H1 (cell line): ENCODE measurements at regions of chr1 and their contacts with region 1.

Region 1: DNA sequence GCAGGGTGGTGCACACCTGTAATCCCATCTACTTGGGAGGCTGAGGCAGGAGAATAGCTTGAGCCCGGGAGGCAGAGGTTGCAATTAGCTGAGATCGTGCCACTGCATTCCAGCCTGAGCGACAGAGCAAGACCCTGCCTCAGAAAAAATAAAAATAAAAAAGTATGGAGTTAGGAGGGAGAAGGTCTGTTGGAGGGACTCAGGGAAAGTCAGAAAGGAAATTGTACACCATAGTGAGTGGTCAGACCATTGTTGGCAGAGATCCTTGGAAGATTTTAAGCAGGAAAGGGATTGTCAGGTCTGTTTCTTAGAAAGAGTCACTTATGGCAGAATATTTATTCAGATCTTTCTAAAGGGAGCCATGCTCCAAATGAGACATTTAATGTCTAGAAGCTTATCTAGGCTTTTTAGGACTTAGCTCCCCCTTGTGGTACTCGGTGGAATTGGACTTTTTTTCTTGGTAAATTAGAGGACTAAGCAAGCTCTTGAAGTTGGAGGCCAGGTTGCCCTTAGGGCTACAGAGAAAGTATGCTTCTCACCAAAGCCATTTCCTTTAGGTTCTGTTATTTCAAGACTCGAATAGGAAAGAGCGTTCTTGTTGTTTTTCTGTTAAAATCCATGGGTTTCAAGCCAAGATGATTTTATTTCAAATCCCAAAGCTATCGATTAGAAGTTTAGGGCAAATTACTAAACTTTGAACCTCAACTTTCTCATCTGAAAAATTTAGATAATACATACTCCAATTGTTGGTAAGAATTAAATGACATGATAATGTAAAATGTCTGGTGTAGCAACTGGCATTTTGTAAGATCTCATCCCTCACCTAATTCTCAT is 16.5 kb downstream of the MIA3 start:
- DNase-seq: peak in 1 of 2 experiments; percentile 64
- H3K4me3 ChIP-seq: no peak overlapping the region
- H3K27ac ChIP-seq: no peak overlapping the region
- H3K4me1 ChIP-seq: no peaks in the 10 kb centered on the region
- H3K27me3 ChIP-seq: no peaks in the 10 kb centered on the region
- CTCF ChIP-seq: peak in 2 of 3 experiments; percentile 67 to 83; a peak in 3 of 4 replicates
- EP300 ChIP-seq: no peak
- POLR2A ChIP-seq: no peak
- RAD21 ChIP-seq: peak; percentile 69 to 70

Region 2: GRCh38 chr1:222465211-222466041 is 169.0 kb before region 1 on chr1:
- CTCF ChIA-PET with region 1: interaction called, 17 read pairs
- POLR2A ChIA-PET with region 1: interaction called, 7 read pairs
- DNase-seq: peak; percentile 88 to 96
- H3K4me3 ChIP-seq: peak overlapping the region; percentile 48 to 86 (median 67)
- H3K27ac ChIP-seq: 0 out of 2 replicates have a peak overlapping the region, but pooled peaks have one; percentile 50
- H3K4me1 ChIP-seq: no peaks in the 10 kb centered on the region
- H3K27me3 ChIP-seq: no peaks in the 10 kb centered on the region
- CTCF ChIP-seq: peak; percentile 97 to 99 (median 99)
- EP300 ChIP-seq: peak in 1 of 2 experiments; percentile 34; a peak in 1 of 3 replicates
- POLR2A ChIP-seq: peak; percentile 60 to 70; a peak in 2 of 3 replicates
- RAD21 ChIP-seq: peak; percentile 94 to 98

Region 3: DNA sequence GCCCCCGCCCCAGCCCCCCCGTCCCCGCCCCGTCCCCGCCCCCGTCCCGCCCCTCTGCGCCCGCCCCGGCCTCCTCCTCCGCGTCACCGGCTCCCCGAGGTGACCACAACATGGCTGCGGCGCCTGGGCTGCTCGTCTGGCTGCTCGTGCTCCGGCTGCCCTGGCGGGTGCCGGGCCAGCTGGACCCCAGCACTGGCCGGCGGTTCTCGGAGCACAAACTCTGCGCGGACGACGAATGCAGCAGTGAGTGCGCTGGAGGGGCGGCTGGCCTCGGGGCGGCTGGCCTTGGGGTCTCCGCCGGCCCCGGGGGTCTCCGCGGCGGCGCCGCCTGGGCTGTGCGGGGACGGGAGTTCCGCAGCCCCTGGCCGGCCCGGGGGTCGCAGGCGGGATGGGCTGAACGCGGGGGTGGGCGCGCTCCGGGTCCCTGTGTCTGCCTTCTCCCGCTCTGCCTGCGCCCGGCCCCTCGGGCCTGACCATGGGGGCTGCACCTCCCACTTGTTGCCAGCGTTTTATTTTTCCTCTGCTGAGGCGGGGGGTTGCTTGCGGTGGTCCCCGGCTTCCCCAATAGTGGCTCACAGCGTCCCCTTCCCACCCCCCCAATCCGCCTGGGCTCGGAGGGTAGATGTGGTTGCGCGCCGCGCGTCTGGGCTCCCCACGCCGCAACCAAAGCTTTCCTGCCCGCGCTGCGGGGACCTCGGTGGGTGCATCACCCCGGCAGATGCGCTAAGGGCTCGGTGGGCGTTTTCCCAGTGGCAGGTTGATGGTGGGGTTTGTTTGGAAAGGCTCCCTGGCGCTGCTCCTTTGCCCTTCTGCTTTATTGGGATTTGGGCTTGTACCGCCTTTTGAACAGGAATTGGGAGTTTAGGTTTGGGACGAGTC is 16.2 kb before region 1 on chr1 and contains the start of gene MIA3:
- CTCF ChIA-PET with region 1: interaction called, 19 read pairs
- POLR2A ChIA-PET with region 1: interaction called, 3 read pairs
- DNase-seq: peak in 1 of 2 experiments; percentile 81
- H3K4me3 ChIP-seq: peak within 1 kb of the TSS; percentile 66 to 91 (median 86)
- H3K27ac ChIP-seq: peak within 1 kb of the TSS; percentile 81
- H3K4me1 ChIP-seq: peaks cover 0 to 4% (median 1%) of the 10 kb centered on the region in 4 experiments; a peak in 3 of 7 replicates
- H3K27me3 ChIP-seq: no peaks in the 10 kb centered on the region
- CTCF ChIP-seq: no peak
- EP300 ChIP-seq: no peak
- POLR2A ChIP-seq: peak; percentile 56 to 86
- RAD21 ChIP-seq: no peak
- total RNA-seq, gene MIA3: 67.5 and 69.0 TPM in 2 replicates